ENCODE measurements at regions of chr4 and their contacts with region 1.

Region 1: GRCh38 chr4:55509266-55509665 is 37.4 kb downstream of the CLOCK start:
- DNase-seq: no peak
- H3K4me3 ChIP-seq: no peak overlapping the region
- H3K27ac ChIP-seq: no peak overlapping the region
- H3K4me1 ChIP-seq: peaks cover 5% of the 10 kb centered on the region
- H3K27me3 ChIP-seq: no peaks in the 10 kb centered on the region
- CTCF ChIP-seq: no peak

Region 2: DNA sequence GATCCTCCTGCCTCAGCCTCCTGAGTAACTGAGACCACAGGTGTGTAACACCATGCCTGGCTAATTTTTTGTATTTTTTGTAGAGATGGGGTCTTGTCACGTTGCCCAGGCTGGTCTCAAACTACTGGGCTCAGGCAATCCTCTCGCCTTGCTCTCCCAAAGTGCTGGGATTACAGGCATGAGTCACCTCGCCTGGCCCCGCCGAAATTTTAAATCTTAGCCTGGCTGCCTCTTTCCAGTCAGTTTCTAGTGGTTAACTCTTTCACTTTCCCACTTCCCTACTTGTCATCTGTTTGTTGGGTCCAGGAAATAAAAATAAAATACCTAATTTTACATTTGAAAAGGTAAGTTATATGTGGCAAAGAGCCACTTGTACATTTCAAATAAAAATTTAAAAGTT is 51.1 kb before region 1 on chr4:
- CTCF ChIA-PET with region 1: no interaction called
- dilution Hi-C with region 1: loop called (anchors 5 kb)
- in situ Hi-C with region 1: no loop called
- intact Hi-C with region 1: no loop called
- DNase-seq: no peak
- H3K4me3 ChIP-seq: no peak overlapping the region
- H3K27ac ChIP-seq: no peak overlapping the region
- H3K4me1 ChIP-seq: peaks cover 4% of the 10 kb centered on the region
- H3K27me3 ChIP-seq: no peaks in the 10 kb centered on the region
- CTCF ChIP-seq: no peak